GM10248 (cell line): ENCODE measurements at regions of chr6 and their contacts with region 1.

Region 1: GRCh38 chr6:33276864-33277662 is at the start of gene B3GALT4:
- DNase-seq: peak; percentile 86
- CTCF ChIP-seq: peak; percentile 31

Region 2: GRCh38 chr6:33288921-33289748 is 12.1 kb after region 1 on chr6 and contains the starts of genes PFDN6 and WDR46:
- CTCF ChIA-PET with region 1: interaction called, 37 read pairs
- POLR2A ChIA-PET with region 1: interaction called, 17 read pairs
- DNase-seq: peak; percentile 94
- CTCF ChIP-seq: no peak

Region 3: DNA sequence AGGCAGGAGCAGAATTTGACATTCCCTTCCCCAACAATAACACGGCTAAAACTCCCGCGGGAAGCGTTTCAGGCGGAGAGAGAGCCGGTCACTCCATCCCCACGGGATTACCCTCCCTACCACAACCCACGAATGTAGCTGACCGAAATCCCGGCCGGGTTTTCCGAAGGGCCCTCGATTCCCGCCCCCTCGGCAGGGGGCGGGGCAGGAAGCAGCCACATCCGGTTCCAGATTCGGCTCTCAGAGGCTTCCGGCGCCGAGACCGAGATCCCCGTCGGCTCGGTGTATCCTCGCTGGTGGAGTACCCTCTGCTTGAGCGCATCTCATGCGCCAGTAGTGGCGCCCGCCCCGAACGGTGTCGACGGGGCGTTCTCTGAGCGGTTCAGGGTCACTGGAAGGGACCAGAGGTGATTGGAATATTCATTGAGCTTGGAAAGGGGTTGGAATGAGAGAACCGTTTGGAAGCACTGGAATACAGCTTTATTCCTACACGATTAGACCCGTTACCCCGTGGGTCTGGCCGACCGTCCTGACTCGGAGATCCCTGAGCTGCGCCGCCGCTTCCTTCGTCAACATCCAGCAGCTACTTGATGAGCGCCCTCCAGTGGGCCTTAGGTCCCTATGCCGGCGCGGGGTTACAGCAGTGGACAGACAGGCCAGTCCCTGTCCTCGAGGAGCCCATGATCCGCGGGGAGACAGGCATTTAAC is 22.3 kb after region 1 on chr6:
- CTCF ChIA-PET with region 1: interaction called, 13 read pairs
- POLR2A ChIA-PET with region 1: interaction called, 13 read pairs
- DNase-seq: peak; percentile 92
- CTCF ChIP-seq: peak; percentile 76

Region 4: GRCh38 chr6:33317669-33318425 is 40.8 kb after region 1 on chr6 and contains the start of gene ZBTB22:
- CTCF ChIA-PET with region 1: interaction called, 4 read pairs
- POLR2A ChIA-PET with region 1: interaction called, 11 read pairs
- DNase-seq: peak; percentile 89
- CTCF ChIP-seq: no peak

Region 5: GRCh38 chr6:33344701-33345697 is 67.9 kb after region 1 on chr6:
- CTCF ChIA-PET with region 1: interaction called, 12 read pairs
- POLR2A ChIA-PET with region 1: no interaction called
- DNase-seq: peak; percentile 72
- CTCF ChIP-seq: peak; percentile 57